Mammary epithelial cell (primary cell): ENCODE measurements at regions of chr1 and their contacts with region 1.

Region 1: GRCh38 chr1:45521398-45522323 is at the start of gene PRDX1:
- DNase-seq: peak; percentile 97
- H3K4me3 ChIP-seq: peak within 1 kb of the TSS; percentile 85 to 96 (median 87)
- H3K27ac ChIP-seq: peak within 1 kb of the TSS; percentile 87
- H3K4me1 ChIP-seq: peaks cover 16% of the 10 kb centered on the region
- H3K27me3 ChIP-seq: no peaks in the 10 kb centered on the region
- CTCF ChIP-seq: peak; percentile 6 to 12
- total RNA-seq, gene PRDX1: 273 to 406 TPM

Region 2: GRCh38 chr1:45550401-45551351 is 29.0 kb after region 1 on chr1 and contains the start of gene AKR1A1:
- CTCF ChIA-PET with region 1: no interaction called
- dilution Hi-C with region 1: no loop called
- in situ Hi-C with region 1: no loop called
- intact Hi-C with region 1: loop called (anchors 1 kb)
- DNase-seq: peak; percentile 91
- H3K4me3 ChIP-seq: peak within 1 kb of the TSS; percentile 51 to 79 (median 60)
- H3K27ac ChIP-seq: peak within 1 kb of the TSS; percentile 58
- H3K4me1 ChIP-seq: peaks cover 12% of the 10 kb centered on the region
- H3K27me3 ChIP-seq: no peaks in the 10 kb centered on the region
- CTCF ChIP-seq: no peak
- total RNA-seq, gene AKR1A1: 58.7 to 79.7 TPM

Region 3: GRCh38 chr1:45563843-45564242 is 42.2 kb after region 1 on chr1:
- CTCF ChIA-PET with region 1: no interaction called
- dilution Hi-C with region 1: no loop called
- in situ Hi-C with region 1: no loop called
- intact Hi-C with region 1: no loop called
- DNase-seq: no peak
- H3K4me3 ChIP-seq: no peak overlapping the region
- H3K27ac ChIP-seq: no peak overlapping the region
- H3K4me1 ChIP-seq: no peaks in the 10 kb centered on the region
- H3K27me3 ChIP-seq: no peaks in the 10 kb centered on the region
- CTCF ChIP-seq: no peak